H1 (cell line): ENCODE measurements at regions of chr13 and their contacts with region 1.

Region 1: DNA sequence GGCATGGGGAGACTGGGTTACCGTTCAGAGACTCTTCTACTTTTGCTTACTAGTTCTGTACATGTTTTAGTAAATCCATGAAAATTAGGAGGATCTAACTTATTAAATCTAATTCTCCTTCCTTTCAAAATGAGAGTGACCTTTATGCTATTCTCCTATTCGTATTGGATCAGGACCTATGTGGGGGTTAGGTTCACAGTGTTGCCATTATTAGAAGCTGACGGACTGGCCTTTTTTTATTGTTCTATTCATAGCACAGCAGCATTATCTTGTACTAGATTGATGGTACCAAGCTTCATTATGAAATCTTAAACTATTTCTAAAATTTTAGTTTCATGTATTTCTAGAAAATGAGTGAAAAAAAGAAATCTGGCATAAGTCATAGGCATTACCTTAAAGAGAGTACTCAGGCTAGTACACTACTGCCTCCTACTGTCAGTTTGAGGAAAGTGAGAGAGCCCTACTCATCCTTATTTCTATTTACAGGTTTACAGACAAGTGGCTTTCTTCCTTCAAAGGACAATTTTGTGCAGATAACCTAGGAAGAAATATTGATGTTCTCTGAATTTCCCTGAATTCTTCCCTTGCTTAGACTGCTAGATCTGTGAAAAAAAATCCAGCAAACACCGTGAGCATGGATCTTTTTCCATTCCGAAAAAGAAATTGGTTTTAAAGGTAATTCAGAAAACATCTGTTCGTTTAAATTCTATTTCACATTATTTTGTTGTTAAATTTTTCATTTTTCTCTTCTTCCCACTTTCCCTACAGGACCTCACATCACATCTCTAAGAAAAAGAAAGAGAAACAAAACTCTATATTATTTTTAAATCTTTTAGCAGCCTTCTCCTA is 485.5 kb downstream of the DIAPH3 start:
- DNase-seq: no peak
- H3K4me3 ChIP-seq: no peak overlapping the region
- H3K27ac ChIP-seq: no peak overlapping the region
- H3K4me1 ChIP-seq: peaks cover 0 to 10% (median 3%) of the 10 kb centered on the region in 4 experiments; a peak in 4 of 7 replicates
- H3K27me3 ChIP-seq: no peaks in the 10 kb centered on the region
- CTCF ChIP-seq: peak in 2 of 3 experiments; percentile 64 to 87; a peak in 2 of 4 replicates
- EP300 ChIP-seq: no peak
- POLR2A ChIP-seq: no peak
- RAD21 ChIP-seq: peak; percentile 94 to 95

Region 2: DNA sequence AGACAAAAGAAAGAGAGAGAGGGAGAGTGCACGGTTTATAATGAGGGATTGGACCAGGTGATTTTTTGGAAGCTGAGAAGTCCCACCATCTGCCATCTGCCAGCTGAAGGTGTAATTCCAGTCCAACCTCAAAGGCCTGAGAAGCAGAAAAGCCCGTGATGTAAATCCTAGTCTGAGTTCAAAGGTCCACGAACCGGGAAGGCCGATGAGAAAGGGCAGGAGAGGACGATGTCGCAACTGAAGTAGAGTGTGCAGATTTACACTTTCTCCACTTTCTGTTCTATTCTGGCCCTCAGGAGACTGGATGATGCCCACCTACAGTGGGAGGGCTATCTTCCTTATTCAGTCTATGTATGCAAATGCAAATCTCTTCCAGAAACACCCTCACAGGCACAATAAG is 14.5 kb before region 1 on chr13:
- CTCF ChIA-PET with region 1: interaction called, 10 read pairs
- POLR2A ChIA-PET with region 1: interaction called, 3 read pairs
- DNase-seq: no peak
- H3K4me3 ChIP-seq: no peak overlapping the region
- H3K27ac ChIP-seq: no peak overlapping the region
- H3K4me1 ChIP-seq: peaks cover 3 to 6% (median 5%) of the 10 kb centered on the region in 4 experiments; a peak in 6 of 7 replicates
- H3K27me3 ChIP-seq: no peaks in the 10 kb centered on the region
- CTCF ChIP-seq: no peak
- EP300 ChIP-seq: no peak
- POLR2A ChIP-seq: no peak
- RAD21 ChIP-seq: no peak

Region 3: GRCh38 chr13:59690857-59691500 is 12.8 kb after region 1 on chr13:
- CTCF ChIA-PET with region 1: interaction called, 29 read pairs
- POLR2A ChIA-PET with region 1: no interaction called
- DNase-seq: no peak
- H3K4me3 ChIP-seq: no peak overlapping the region
- H3K27ac ChIP-seq: no peak overlapping the region
- H3K4me1 ChIP-seq: peaks cover 0 to 4% (median 2%) of the 10 kb centered on the region in 4 experiments; a peak in 4 of 7 replicates
- H3K27me3 ChIP-seq: no peaks in the 10 kb centered on the region
- CTCF ChIP-seq: no peak
- EP300 ChIP-seq: no peak
- POLR2A ChIP-seq: no peak
- RAD21 ChIP-seq: no peak

Region 4: DNA sequence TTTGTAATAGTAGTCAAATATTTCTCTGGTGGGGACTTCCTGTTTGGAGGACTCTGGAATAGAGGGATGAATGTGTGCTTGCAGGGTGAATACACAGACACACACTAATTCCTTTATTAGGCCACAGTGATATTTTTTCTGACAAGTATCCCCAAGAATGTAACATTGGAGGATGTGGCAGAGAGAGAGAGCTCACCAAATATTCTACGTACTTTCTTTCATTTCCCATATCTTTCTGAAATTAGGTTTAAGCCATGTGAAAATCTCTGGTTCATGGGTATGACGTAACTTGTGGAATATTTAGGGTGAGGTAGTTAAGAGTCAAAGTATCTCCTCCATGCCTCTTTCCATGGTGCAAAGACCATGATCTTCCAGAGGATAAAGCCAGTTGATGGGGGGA is 22.1 kb after region 1 on chr13:
- CTCF ChIA-PET with region 1: interaction called, 25 read pairs
- POLR2A ChIA-PET with region 1: no interaction called
- DNase-seq: no peak
- H3K4me3 ChIP-seq: no peak overlapping the region
- H3K27ac ChIP-seq: no peak overlapping the region
- H3K4me1 ChIP-seq: no peaks in the 10 kb centered on the region
- H3K27me3 ChIP-seq: no peaks in the 10 kb centered on the region
- CTCF ChIP-seq: no peak
- EP300 ChIP-seq: no peak
- POLR2A ChIP-seq: no peak
- RAD21 ChIP-seq: no peak

Region 5: GRCh38 chr13:59806801-59807200 is 128.6 kb after region 1 on chr13:
- CTCF ChIA-PET with region 1: no interaction called
- POLR2A ChIA-PET with region 1: no interaction called
- DNase-seq: no peak
- H3K4me3 ChIP-seq: no peak overlapping the region
- H3K27ac ChIP-seq: no peak overlapping the region
- H3K4me1 ChIP-seq: no peaks in the 10 kb centered on the region
- H3K27me3 ChIP-seq: no peaks in the 10 kb centered on the region
- CTCF ChIP-seq: no peak
- EP300 ChIP-seq: no peak
- POLR2A ChIP-seq: no peak
- RAD21 ChIP-seq: no peak